GM12878 (cell line): ENCODE measurements at regions of chr18 and their contacts with region 1.

Region 1: GRCh38 chr18:75016025-75016717 is 192.8 kb downstream of the PTGR3 start:
- DNase-seq: peak; percentile 28
- ATAC-seq: peak; percentile 96
- H3K4me3 ChIP-seq: no peak overlapping the region
- H3K27ac ChIP-seq: peak overlapping the region; percentile 72
- H3K4me1 ChIP-seq: peaks cover 8% of the 10 kb centered on the region; the same call in 1 of the 2 replicates
- H3K27me3 ChIP-seq: no peaks in the 10 kb centered on the region
- CTCF ChIP-seq: no peak
- EP300 ChIP-seq: peak in 1 of 2 experiments; percentile 34; a peak in 1 of 4 replicates
- POLR2A ChIP-seq: no peak
- RAD21 ChIP-seq: no peak

Region 2: DNA sequence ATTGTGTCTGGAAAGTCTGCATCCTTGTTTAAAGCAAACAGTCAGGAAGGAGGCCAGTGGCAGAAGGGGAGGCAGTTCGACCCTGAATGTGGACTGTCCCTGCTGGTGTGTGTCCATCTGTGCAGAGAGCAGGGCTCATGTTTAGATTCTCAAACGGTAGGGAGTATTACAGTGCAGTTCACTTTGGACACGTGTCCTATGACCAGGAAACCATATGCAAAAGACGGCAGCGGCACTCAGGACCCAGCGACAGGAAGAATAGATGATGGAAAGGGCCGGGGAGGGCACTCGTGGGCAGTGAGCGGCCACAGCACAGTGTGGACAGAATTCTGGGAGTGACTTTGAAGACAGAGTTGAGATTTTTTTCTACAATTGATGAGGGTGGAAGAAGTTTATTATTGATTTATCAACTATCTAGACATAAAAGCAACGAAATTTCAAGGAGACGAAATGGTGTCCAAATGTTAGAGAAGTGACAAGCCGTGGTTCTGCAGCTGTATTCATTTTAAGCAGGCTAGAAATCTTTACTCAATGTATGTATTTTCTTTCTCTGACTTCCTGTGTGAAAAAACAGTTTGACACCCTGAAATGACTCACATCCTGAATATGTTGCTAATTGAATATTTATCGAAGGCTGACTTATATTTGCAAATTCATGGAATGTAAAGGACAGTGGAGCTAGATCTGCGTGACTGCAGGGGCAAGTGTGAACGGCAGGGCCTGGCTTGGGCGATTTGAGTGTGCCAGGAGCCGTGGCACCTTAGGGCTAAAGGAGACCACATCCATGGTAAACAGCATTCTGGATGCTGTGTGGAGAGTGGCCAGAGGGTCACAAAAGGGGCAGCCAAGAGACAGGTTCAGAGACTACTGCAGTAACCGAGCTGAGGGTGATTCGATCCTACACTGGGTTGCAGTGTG is 21.4 kb before region 1 on chr18:
- CTCF ChIA-PET with region 1: interaction called, 8 read pairs
- POLR2A ChIA-PET with region 1: interaction called, 4 read pairs
- RAD21 ChIA-PET with region 1: interaction called, 9 read pairs
- SMC1A ChIA-PET with region 1: interaction called, 54 read pairs
- in situ Hi-C with region 1: no loop called
- intact Hi-C with region 1: no loop called
- DNase-seq: peak; percentile 35
- ATAC-seq: peak; percentile 91
- H3K4me3 ChIP-seq: peak overlapping the region; percentile 42; the same call in 1 of the 2 replicates
- H3K27ac ChIP-seq: peak overlapping the region; percentile 88
- H3K4me1 ChIP-seq: peaks cover 20% of the 10 kb centered on the region
- H3K27me3 ChIP-seq: no peaks in the 10 kb centered on the region
- CTCF ChIP-seq: no peak
- EP300 ChIP-seq: peak; percentile 27 to 81; a peak in 2 of 4 replicates
- POLR2A ChIP-seq: no peak; the same call in 1 of the 2 replicates
- RAD21 ChIP-seq: no peak